Esophagus muscularis mucosa (tissue), 4 donors: ENCODE measurements at regions of chr1 and their contacts with region 1.

Region 1: DNA sequence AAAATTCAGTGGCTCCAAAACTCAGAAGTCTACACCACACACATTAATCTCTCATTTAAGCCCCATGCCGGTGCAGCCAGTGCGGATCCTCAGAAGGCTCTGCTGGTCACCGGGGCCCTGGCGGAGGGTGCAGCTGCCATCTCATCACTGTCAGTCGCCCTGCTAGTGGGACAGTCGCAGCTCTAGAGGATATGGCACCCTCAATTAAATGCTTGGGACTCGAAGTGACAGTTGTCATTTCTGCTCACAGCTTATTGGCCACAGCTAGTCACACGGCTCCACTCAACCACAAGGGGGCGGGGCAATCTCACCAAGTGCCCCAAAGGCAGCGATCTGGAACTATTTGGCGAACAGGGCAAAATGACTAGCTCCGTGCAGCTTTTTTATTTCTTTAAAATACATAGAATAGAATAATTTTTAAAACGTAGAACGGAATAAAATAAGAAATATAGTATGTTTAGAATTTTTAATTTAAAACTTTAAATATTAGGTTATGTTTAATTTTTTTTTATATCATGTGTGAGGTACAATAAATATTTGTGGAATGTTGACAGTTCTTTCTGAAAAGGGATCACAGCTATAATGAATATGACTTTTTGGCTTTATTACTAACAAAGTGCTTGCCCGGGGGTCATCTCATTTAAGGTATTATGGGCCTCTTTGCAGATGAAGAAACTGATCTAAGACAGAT is 8.0 kb upstream of the MAN1C1 start:
- DNase-seq: peak; percentile 97
- H3K4me3 ChIP-seq: peak overlapping the region in 3 of 4 donors; percentile 18 to 45 (median 30)
- H3K27ac ChIP-seq: no peak overlapping the region
- H3K4me1 ChIP-seq: peaks cover 0 to 33% (median 30%) of the 10 kb centered on the region in 4 donors
- H3K27me3 ChIP-seq: no peaks in the 10 kb centered on the region
- CTCF ChIP-seq: peak; percentile 83 to 95 (median 88)
- EP300 ChIP-seq: no peak
- POLR2A ChIP-seq: no peak

Region 2: GRCh38 chr1:25810341-25811299 is 202.0 kb after region 1 on chr1:
- intact Hi-C with region 1: loop called (anchors 5 kb)
- DNase-seq: peak; percentile 92
- H3K4me3 ChIP-seq: no peak overlapping the region
- H3K27ac ChIP-seq: peak overlapping the region in 3 of 4 donors; percentile 17 to 46 (median 22)
- H3K4me1 ChIP-seq: peaks cover 35 to 43% (median 40%) of the 10 kb centered on the region in 4 donors
- H3K27me3 ChIP-seq: no peaks in the 10 kb centered on the region
- CTCF ChIP-seq: peak; percentile 84 to 94 (median 90)
- EP300 ChIP-seq: no peak
- POLR2A ChIP-seq: no peak